SK-N-SH (cell line): ENCODE measurements at regions of chr3 and their contacts with region 1.

Region 1: DNA sequence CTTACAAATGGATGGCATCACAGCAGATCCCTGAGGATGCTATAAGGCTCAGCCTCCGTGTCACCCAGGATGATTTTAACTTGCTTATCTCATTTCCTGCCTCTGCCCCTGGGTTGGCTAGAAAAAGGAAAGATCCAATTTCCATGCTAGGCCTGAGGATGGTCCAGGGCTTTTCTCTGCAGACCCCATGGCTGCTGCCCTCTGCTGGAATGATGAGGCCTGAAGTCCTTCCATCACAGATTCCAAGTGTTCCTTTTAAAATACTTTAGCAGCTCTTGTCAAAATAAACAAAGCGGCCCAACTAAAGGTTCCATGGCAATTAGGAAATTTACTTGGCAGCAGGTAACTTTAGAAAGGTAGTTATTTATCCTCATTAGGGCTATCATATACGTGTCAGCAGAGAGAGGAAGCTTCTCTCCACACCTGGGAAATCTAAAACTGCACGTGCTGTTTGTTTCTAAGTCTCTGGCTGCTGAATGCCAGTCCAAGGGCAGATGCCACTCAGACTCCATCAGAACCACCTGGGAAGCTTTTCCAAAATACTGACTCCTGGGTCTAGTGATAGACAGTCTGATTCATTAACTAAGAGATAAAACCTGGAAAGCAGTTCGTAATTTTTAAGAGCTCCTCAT is 401.9 kb upstream of the IL12A start:
- DNase-seq: peak; percentile 49
- H3K4me3 ChIP-seq: no peak overlapping the region; a peak in 1 of 4 replicates
- H3K27ac ChIP-seq: no peak overlapping the region
- H3K4me1 ChIP-seq: peaks cover 0 to 5% of the 10 kb centered on the region in 2 experiments; a peak in 1 of 4 replicates
- H3K27me3 ChIP-seq: no peaks in the 10 kb centered on the region
- CTCF ChIP-seq: peak; percentile 71
- EP300 ChIP-seq: no peak; a peak in 1 of 4 replicates
- RAD21 ChIP-seq: peak; percentile 78

Region 2: GRCh38 chr3:159560214-159560979 is 26.3 kb before region 1 on chr3:
- CTCF ChIA-PET with region 1: interaction called, 12 read pairs
- POLR2A ChIA-PET with region 1: no interaction called
- DNase-seq: no peak
- H3K4me3 ChIP-seq: no peak overlapping the region
- H3K27ac ChIP-seq: no peak overlapping the region
- H3K4me1 ChIP-seq: no peaks in the 10 kb centered on the region
- H3K27me3 ChIP-seq: no peaks in the 10 kb centered on the region
- CTCF ChIP-seq: no peak
- EP300 ChIP-seq: no peak
- RAD21 ChIP-seq: no peak

Region 3: GRCh38 chr3:159796744-159797143 is 210.1 kb after region 1 on chr3:
- CTCF ChIA-PET with region 1: interaction called, 11 read pairs
- POLR2A ChIA-PET with region 1: no interaction called
- DNase-seq: no peak
- H3K4me3 ChIP-seq: no peak overlapping the region
- H3K27ac ChIP-seq: peak overlapping the region in 1 of 2 experiments; percentile 75; a peak in 2 of 4 replicates
- H3K4me1 ChIP-seq: peaks cover 0 to 2% of the 10 kb centered on the region in 2 experiments; a peak in 1 of 4 replicates
- H3K27me3 ChIP-seq: no peaks in the 10 kb centered on the region
- CTCF ChIP-seq: no peak
- EP300 ChIP-seq: no peak
- RAD21 ChIP-seq: no peak

Region 4: DNA sequence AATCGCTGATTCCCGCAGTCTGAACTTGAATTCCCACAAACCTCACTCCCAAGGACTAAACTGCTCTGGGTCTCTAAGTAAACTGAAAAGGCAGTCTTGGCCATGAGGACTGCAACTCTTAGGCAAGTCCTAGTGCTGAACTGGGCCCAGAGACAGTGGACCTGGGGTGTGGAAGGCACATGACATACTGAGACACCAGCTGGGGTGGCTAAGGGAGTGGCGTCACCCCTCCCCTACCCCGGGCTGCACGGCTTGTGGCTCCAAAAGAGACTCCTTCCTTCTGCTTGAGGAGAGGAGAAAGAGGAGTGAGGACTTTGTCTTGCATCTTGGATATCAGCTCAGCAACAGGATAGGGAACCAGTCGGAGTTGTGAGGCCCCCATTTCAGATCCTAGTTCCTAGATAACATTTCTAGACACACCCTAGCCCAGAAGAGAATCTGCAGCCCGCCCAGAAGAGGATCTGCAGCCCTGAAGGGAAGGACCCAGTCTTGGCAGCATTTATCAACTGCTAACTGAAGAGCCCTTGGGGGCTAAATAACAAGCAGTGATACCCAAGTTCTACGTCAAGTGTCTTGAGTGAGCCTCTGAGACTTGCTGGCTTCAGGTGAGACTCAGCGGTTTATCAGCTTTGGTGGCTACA is 527.8 kb after region 1 on chr3:
- CTCF ChIA-PET with region 1: no interaction called
- POLR2A ChIA-PET with region 1: no interaction called
- DNase-seq: no peak
- H3K4me3 ChIP-seq: no peak overlapping the region
- H3K27ac ChIP-seq: no peak overlapping the region
- H3K4me1 ChIP-seq: no peaks in the 10 kb centered on the region
- H3K27me3 ChIP-seq: no peaks in the 10 kb centered on the region
- CTCF ChIP-seq: no peak
- EP300 ChIP-seq: no peak
- RAD21 ChIP-seq: no peak